ENCODE measurements at regions of chr17 and their contacts with region 1.

Region 1: GRCh38 chr17:35849469-35850348 is 19.0 kb downstream of the HEATR9 start:
- DNase-seq: no peak
- ATAC-seq: peak; percentile 57
- H3K4me3 Mint-ChIP-seq: no peak overlapping the region
- H3K27ac Mint-ChIP-seq: no peak overlapping the region
- H3K4me1 Mint-ChIP-seq: no peaks in the 10 kb centered on the region
- H3K27me3 Mint-ChIP-seq: no peaks in the 10 kb centered on the region
- CTCF ChIP-seq: peak; percentile 52

Region 2: GRCh38 chr17:35713069-35713728 is 136.5 kb before region 1 on chr17:
- CTCF ChIA-PET with region 1: no interaction called
- POLR2A ChIA-PET with region 1: no interaction called
- intact Hi-C with region 1: no loop called
- DNase-seq: no peak
- ATAC-seq: no peak
- H3K4me3 Mint-ChIP-seq: no peak overlapping the region
- H3K27ac Mint-ChIP-seq: no peak overlapping the region
- H3K4me1 Mint-ChIP-seq: peaks cover 13% of the 10 kb centered on the region
- H3K27me3 Mint-ChIP-seq: no peaks in the 10 kb centered on the region
- CTCF ChIP-seq: no peak

Region 3: GRCh38 chr17:35947156-35947585 is 97.5 kb after region 1 on chr17:
- CTCF ChIA-PET with region 1: no interaction called
- POLR2A ChIA-PET with region 1: no interaction called
- intact Hi-C with region 1: loop called (anchors 5 kb)
- DNase-seq: peak; percentile 32
- ATAC-seq: peak; percentile 98
- H3K4me3 Mint-ChIP-seq: no peak overlapping the region
- H3K27ac Mint-ChIP-seq: no peak overlapping the region
- H3K4me1 Mint-ChIP-seq: no peaks in the 10 kb centered on the region
- H3K27me3 Mint-ChIP-seq: peaks cover 2% of the 10 kb centered on the region
- CTCF ChIP-seq: no peak